Activated naive CD4-positive, alpha-beta T cell treated with anti-CD3 and anti-CD28 coated beads, Interleukin-2, amount 10 ng/mL, durations not matched to agents 7 days and 5 days (primary cell): ENCODE measurements at regions of chr1 and their contacts with region 1.

Region 1: GRCh38 chr1:229227298-229227919 is 43.5 kb upstream of the RAB4A start:
- DNase-seq: peak; percentile 87
- H3K4me3 Mint-ChIP-seq: no peak overlapping the region
- H3K27ac Mint-ChIP-seq: no peak overlapping the region
- H3K4me1 Mint-ChIP-seq: peaks cover 20% of the 10 kb centered on the region
- H3K27me3 Mint-ChIP-seq: peaks cover 32% of the 10 kb centered on the region

Region 2: GRCh38 chr1:228664399-228664914 is 563.0 kb before region 1 on chr1:
- CTCF ChIA-PET with region 1: interaction called, 45 read pairs
- DNase-seq: peak; percentile 86
- H3K4me3 Mint-ChIP-seq: no peak overlapping the region
- H3K27ac Mint-ChIP-seq: no peak overlapping the region
- H3K4me1 Mint-ChIP-seq: no peaks in the 10 kb centered on the region
- H3K27me3 Mint-ChIP-seq: peaks cover 24% of the 10 kb centered on the region

Region 3: DNA sequence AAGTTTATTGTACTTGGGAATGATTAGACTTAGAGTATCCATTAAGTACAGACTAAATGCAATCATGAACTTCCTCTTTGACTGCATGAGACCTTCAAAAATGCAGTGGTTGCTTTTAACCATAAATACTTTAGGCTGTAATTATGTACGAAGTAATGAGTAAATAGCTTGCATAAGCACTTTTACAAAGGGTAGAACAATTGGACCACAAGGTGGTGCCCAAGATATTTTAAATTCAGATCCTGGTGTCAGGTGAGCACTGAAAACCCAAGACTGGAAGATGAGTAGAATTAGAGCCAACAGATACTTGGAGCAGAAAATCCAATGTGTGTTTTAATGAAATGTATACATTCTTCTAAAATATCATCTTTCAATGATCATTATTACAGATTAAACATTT is 535.5 kb before region 1 on chr1:
- CTCF ChIA-PET with region 1: interaction called, 30 read pairs
- DNase-seq: peak; percentile 49
- H3K4me3 Mint-ChIP-seq: no peak overlapping the region
- H3K27ac Mint-ChIP-seq: no peak overlapping the region
- H3K4me1 Mint-ChIP-seq: peaks cover 10% of the 10 kb centered on the region
- H3K27me3 Mint-ChIP-seq: peaks cover 29% of the 10 kb centered on the region

Region 4: DNA sequence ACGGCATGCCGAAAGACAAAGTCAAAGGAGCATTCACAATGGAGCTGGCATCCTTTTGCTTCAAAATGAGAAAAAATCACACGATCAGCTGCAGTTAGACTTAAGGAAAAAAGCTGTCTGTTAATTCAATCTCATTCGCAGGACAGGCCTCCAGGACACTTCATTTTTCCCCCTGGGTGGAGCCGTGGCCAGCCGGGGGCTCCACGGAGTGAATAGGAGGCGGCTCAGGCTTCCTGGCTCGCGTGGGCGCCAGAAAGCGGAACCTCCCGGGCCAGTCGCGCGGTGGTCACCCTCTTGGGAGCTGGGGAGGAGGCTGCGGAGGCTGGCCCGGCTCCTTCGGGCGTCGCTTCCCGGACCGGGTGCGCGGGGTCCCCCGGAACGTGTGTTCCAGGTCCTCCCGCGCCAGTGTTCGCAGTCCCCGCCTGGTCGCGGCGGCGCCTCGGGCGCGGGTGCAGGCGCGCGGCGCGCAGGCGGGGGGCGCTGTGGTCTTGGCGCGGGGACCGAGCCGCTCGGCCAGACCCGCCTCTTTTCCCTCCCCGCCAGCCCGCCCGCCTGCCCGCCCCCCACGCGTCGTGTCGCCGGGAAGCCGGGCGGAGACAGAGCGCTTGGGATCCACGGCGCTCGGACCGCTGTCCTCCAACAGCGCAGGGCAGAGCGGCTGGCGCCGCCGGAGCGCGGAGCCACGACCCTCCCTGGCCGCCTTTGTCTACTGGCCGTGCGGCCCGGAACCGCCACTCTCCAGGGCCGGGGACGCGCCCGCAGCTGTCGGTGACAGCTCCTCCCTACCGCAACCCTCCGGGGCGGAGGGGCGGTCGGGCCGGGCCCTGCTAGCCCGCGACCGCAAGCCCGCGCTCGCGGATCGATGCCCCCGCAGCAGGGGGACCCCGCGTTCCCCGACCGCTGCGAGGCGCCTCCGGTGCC is 492.3 kb before region 1 on chr1 and contains the start of gene RHOU:
- CTCF ChIA-PET with region 1: interaction called, 56 read pairs
- DNase-seq: peak; percentile 78
- H3K4me3 Mint-ChIP-seq: peak within 1 kb of the TSS; percentile 90
- H3K27ac Mint-ChIP-seq: peak within 1 kb of the TSS; percentile 83
- H3K4me1 Mint-ChIP-seq: peaks cover 38% of the 10 kb centered on the region
- H3K27me3 Mint-ChIP-seq: peaks cover 20% of the 10 kb centered on the region

Region 5: GRCh38 chr1:229186373-229187056 is 40.9 kb before region 1 on chr1:
- CTCF ChIA-PET with region 1: interaction called, 14 read pairs
- DNase-seq: peak; percentile 64
- H3K4me3 Mint-ChIP-seq: no peak overlapping the region
- H3K27ac Mint-ChIP-seq: peak overlapping the region; percentile 72
- H3K4me1 Mint-ChIP-seq: peaks cover 21% of the 10 kb centered on the region
- H3K27me3 Mint-ChIP-seq: no peaks in the 10 kb centered on the region